ENCODE measurements at regions of chr13 and their contacts with region 1.

Region 1: DNA sequence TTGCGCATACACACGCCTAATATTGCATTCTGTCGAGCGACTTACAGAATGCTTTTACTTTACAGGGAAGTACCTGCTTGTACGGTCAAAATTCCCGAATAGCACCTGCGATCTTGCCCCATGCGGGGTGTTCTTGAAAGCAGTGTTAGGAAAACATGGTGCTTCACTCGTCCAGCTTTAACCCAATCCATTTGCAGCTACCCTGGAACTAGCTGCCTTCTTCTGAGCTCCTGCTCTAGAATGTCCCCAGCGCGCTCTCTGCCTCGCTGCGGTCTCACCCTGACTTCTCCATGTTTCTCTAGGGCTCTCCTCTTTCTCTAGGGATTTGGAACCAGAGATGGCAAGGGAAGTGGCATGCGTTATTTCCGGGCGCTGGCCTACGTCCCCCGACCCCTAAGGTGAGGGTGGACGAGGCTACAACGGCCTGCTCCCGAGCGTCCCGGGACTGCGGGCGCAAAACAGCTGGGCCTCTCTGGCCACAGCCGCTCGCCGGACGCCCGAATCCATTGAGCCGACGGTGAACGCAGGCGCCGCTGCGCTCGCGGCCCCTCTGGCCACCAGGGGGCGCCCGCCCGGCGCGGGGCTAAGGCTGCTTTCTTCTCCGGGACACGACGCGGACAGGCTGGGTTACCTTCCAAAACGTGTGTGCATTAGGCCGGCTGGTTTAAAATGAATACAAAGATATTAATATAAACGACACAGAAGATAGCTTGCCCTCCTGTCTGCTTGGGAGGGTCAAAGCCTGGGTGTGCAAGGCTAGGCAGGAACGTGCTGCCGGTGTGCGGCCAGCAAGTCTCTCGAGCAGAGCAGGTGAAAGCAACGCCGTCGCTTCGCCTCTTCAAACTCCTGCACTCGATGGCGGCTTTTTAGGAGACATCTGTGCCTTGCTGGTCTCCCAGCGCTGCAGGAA is 1.8 kb upstream of the SPRY2 start:
- DNase-seq: no peak
- ATAC-seq: peak; percentile 59
- H3K4me3 ChIP-seq: peak overlapping the region; percentile 90
- H3K27ac ChIP-seq: peak overlapping the region; percentile 91
- H3K4me1 ChIP-seq: peaks cover 8% of the 10 kb centered on the region
- H3K27me3 ChIP-seq: no peaks in the 10 kb centered on the region
- CTCF ChIP-seq: peak; percentile 96

Region 2: DNA sequence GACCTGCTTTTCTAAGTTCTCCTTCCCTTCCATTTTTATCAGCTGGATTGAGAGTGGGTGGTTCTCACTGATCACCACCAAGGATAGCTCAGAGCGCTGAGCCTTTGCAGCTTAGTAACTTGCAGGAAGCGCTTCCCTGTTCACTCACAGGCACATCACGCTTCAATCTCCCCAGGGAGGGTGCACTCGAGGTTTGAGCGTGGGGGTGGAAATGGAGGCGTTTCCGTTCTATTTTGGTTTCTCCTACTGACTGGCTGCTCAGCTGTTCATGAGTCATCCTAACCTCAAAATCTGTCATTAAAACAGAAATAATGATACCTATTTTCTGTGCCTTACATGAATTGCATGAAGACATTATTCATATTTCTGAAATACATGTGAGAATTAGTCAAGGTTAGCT is 293.9 kb before region 1 on chr13:
- CTCF ChIA-PET with region 1: no interaction called
- POLR2A ChIA-PET with region 1: no interaction called
- in situ Hi-C with region 1: no loop called
- intact Hi-C with region 1: loop called (anchors 10 kb)
- DNase-seq: peak; percentile 85
- ATAC-seq: peak; percentile 97
- H3K4me3 ChIP-seq: peak overlapping the region in 1 of 2 experiments; percentile 7; a peak in 1 of 4 replicates
- H3K27ac ChIP-seq: peak overlapping the region; percentile 63
- H3K4me1 ChIP-seq: peaks cover 24% of the 10 kb centered on the region
- H3K27me3 ChIP-seq: no peaks in the 10 kb centered on the region
- CTCF ChIP-seq: no peak

Region 3: DNA sequence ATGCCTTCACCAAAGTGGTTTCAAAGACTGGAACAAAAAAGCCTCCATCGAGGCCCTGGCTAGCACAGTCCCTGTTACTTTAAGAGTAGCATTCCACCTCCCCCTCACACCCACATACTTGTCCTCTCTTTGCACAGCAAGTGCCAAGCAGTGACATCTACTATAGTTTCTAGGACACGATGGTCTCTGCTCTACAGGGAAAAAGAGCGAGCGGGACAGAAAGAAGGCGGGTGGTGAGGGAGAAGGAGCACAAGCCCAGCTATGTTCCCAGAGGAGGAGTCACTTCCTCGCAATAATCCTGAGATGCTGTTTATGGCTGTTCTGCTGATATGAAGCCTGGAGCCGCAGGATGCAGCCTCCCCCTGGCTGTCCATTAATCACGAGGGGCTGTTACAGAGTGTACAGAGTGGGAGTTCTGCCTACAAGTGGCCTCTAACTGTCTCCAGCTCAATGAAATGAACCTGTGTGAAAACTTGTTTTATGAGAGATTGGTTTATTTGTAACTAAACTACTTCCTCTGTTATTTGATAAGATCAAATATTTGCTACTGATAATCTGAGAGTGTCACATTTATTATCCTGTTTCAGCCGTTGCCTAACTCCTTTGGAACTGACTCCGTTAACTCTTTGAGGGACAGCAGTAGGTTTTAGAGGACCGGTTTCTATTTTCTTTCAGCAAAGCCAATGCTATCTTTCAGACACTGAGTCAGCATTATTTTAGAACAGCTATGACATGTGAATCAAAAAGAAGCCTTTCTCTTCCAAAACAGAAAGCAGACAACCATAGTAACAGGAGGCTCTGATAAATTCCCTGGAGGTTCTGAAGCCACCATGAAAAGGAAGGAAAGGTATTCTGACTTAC is 209.8 kb before region 1 on chr13:
- CTCF ChIA-PET with region 1: no interaction called
- POLR2A ChIA-PET with region 1: interaction called, 4 read pairs
- in situ Hi-C with region 1: no loop called
- intact Hi-C with region 1: loop called (anchors 10 kb)
- DNase-seq: no peak
- ATAC-seq: peak; percentile 96
- H3K4me3 ChIP-seq: peak overlapping the region; percentile 25 to 57
- H3K27ac ChIP-seq: peak overlapping the region; percentile 89
- H3K4me1 ChIP-seq: peaks cover 20% of the 10 kb centered on the region
- H3K27me3 ChIP-seq: no peaks in the 10 kb centered on the region
- CTCF ChIP-seq: no peak

Region 4: DNA sequence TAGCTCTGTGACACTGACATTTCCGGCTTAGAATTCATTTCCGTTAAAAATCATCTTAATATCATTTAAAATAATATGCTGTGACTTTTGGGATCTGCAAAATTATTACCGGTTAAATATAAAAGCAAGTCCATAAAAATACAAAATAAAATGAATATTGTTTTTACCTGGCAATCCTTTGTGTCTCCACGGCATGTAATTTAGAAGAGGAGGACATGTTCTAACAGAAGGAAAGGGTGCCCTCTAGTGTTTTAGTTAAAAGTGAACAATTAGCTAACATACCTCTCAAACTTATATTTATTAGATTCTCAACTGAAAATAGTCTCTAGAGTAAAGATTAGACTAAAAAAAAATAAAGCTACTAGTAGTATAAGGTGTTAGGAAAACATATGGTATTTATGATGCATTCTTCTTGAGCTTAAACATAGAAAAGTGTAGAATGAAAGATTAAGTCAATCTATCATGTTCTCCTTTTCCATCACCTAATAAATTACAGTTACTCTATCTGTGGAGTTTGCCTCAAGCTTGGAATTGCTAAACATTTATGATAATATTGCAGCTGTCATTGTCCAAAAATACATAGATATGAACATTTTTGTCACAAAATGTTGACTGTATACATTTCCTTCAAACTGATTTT is 674.9 kb after region 1 on chr13:
- CTCF ChIA-PET with region 1: interaction called, 4 read pairs
- POLR2A ChIA-PET with region 1: no interaction called
- in situ Hi-C with region 1: no loop called
- intact Hi-C with region 1: loop called (anchors 5 kb)
- DNase-seq: no peak
- ATAC-seq: no peak; the same call in 1 of the 2 replicates
- H3K4me3 ChIP-seq: no peak overlapping the region
- H3K27ac ChIP-seq: no peak overlapping the region
- H3K4me1 ChIP-seq: no peaks in the 10 kb centered on the region
- H3K27me3 ChIP-seq: no peaks in the 10 kb centered on the region
- CTCF ChIP-seq: peak; percentile 47; the same call in 1 of the 2 replicates

Measured in Panc1 (cell line).